ENCODE measurements at regions of chr15 and their contacts with region 1.

Region 1: DNA sequence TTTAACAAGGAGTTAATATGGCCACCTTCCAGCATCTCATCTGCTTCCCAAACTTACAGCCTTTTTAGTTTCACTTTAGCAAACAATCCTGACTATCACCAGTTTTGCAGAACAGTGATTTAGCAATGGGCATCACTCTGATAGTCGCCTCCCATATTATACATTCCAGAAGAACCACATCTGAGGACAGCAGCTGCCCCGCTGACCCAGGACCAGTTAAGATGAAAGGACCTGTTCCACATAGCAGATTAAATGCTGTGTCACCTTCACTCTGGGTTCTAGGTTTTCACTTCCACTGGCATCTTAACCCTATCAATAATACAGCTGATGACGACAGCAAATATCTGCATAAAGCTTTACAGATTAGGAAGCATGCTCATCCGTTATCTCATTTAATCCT is 99.8 kb downstream of the TRIM69 start:
- DNase-seq: no peak
- ATAC-seq: no peak
- H3K4me3 ChIP-seq: no peak overlapping the region
- H3K4me3 Mint-ChIP-seq: no peak overlapping the region
- H3K27ac ChIP-seq: no peak overlapping the region
- H3K27ac Mint-ChIP-seq: no peak overlapping the region
- H3K4me1 ChIP-seq: no peaks in the 10 kb centered on the region
- H3K4me1 Mint-ChIP-seq: peaks cover 3% of the 10 kb centered on the region
- H3K27me3 ChIP-seq: no peaks in the 10 kb centered on the region
- H3K27me3 Mint-ChIP-seq: no peaks in the 10 kb centered on the region
- CTCF ChIP-seq: no peak

Region 2: GRCh38 chr15:44753345-44753744 is 82.7 kb before region 1 on chr15:
- CTCF ChIA-PET with region 1: no interaction called
- POLR2A ChIA-PET with region 1: no interaction called
- intact Hi-C with region 1: no loop called
- DNase-seq: no peak
- ATAC-seq: no peak
- H3K4me3 ChIP-seq: no peak overlapping the region
- H3K4me3 Mint-ChIP-seq: no peak overlapping the region
- H3K27ac ChIP-seq: no peak overlapping the region
- H3K27ac Mint-ChIP-seq: no peak overlapping the region
- H3K4me1 ChIP-seq: no peaks in the 10 kb centered on the region
- H3K4me1 Mint-ChIP-seq: no peaks in the 10 kb centered on the region
- H3K27me3 ChIP-seq: no peaks in the 10 kb centered on the region
- H3K27me3 Mint-ChIP-seq: no peaks in the 10 kb centered on the region
- CTCF ChIP-seq: no peak

Region 3: GRCh38 chr15:44775953-44776352 is 60.1 kb before region 1 on chr15:
- CTCF ChIA-PET with region 1: no interaction called
- POLR2A ChIA-PET with region 1: no interaction called
- intact Hi-C with region 1: no loop called
- DNase-seq: no peak
- ATAC-seq: no peak
- H3K4me3 ChIP-seq: no peak overlapping the region
- H3K4me3 Mint-ChIP-seq: no peak overlapping the region
- H3K27ac ChIP-seq: no peak overlapping the region
- H3K27ac Mint-ChIP-seq: no peak overlapping the region
- H3K4me1 ChIP-seq: no peaks in the 10 kb centered on the region
- H3K4me1 Mint-ChIP-seq: no peaks in the 10 kb centered on the region
- H3K27me3 ChIP-seq: no peaks in the 10 kb centered on the region
- H3K27me3 Mint-ChIP-seq: no peaks in the 10 kb centered on the region
- CTCF ChIP-seq: no peak

Region 4: GRCh38 chr15:45064386-45064785 is 228.3 kb after region 1 on chr15:
- CTCF ChIA-PET with region 1: no interaction called
- POLR2A ChIA-PET with region 1: no interaction called
- intact Hi-C with region 1: loop called in 1 of 2 experiments (anchors 5 kb)
- DNase-seq: no peak
- ATAC-seq: no peak
- H3K4me3 ChIP-seq: no peak overlapping the region
- H3K4me3 Mint-ChIP-seq: no peak overlapping the region
- H3K27ac ChIP-seq: no peak overlapping the region
- H3K27ac Mint-ChIP-seq: no peak overlapping the region
- H3K4me1 ChIP-seq: no peaks in the 10 kb centered on the region
- H3K4me1 Mint-ChIP-seq: no peaks in the 10 kb centered on the region
- H3K27me3 ChIP-seq: no peaks in the 10 kb centered on the region
- H3K27me3 Mint-ChIP-seq: no peaks in the 10 kb centered on the region
- CTCF ChIP-seq: no peak

Measured in CD4-positive, alpha-beta T cell (primary cell).